ENCODE measurements at regions of chr13 and their contacts with region 1.

Region 1: DNA sequence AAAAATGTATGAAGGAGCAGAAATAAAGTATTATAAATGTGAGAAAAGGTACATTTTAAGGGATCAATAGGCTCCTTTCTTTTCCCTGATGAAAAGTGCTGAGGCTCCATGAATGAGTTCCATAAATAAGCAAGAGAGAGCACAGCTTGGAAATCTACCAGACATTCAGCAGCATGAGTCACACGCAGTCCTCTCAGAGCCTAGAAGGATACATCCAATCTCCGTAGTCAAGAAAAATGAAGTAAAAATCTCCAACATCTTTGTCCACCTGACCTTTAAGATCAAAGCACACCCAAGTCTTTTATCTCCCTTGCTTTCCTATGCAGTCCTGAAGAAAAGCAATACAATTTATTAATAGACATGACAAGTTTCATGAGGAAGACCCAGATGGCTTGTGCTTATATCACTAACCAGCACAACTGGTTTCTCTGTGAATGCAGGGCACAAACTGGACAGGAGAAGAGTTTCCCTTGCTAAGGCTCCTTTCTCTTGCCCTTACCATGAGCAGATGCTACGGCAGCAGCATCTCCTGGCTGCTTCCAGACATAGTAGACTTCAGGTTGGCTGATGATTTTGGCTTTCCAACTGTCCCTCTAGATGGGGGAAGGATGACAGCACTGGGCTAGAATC is 730.8 kb downstream of the EFNB2 start:
- DNase-seq: peak in 1 of 2 donors; percentile 7
- ATAC-seq: no peak
- H3K4me3 ChIP-seq: no peak overlapping the region
- H3K27ac ChIP-seq: no peak overlapping the region
- H3K4me1 ChIP-seq: no peaks in the 10 kb centered on the region
- H3K27me3 ChIP-seq: no peaks in the 10 kb centered on the region
- CTCF ChIP-seq: no peak

Region 2: GRCh38 chr13:106291006-106291405 is 486.3 kb after region 1 on chr13:
- intact Hi-C with region 1: no loop called
- DNase-seq: no peak
- ATAC-seq: no peak
- H3K4me3 ChIP-seq: no peak overlapping the region
- H3K27ac ChIP-seq: no peak overlapping the region
- H3K4me1 ChIP-seq: no peaks in the 10 kb centered on the region
- H3K27me3 ChIP-seq: peaks cover 0 to 4% (median 0%) of the 10 kb centered on the region in 7 donors
- CTCF ChIP-seq: no peak

Region 3: DNA sequence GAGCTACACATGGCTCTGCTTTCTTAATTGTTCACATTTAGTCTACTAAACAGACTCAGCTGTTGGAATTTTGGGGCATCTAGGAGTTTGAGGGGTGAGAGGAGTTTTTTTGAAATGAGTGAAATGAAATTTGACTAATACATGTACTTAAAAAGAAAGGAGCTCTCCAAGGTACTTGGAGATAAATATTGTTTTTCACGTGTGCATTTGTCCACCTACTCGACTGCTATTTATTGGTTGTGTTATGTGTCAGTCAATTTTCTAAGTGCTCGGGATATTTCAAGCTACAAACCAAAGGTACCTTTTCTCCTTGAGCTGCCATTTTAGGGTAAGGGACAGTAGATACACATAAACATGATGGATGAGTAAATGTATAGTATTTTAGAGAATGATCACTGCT is 1713.6 kb after region 1 on chr13:
- intact Hi-C with region 1: loop called in 1 of 10 experiments (anchors 5 kb)
- DNase-seq: no peak
- ATAC-seq: no peak
- H3K4me3 ChIP-seq: no peak overlapping the region
- H3K27ac ChIP-seq: no peak overlapping the region
- H3K4me1 ChIP-seq: no peaks in the 10 kb centered on the region
- H3K27me3 ChIP-seq: peaks cover 0 to 4% (median 0%) of the 10 kb centered on the region in 7 donors
- CTCF ChIP-seq: no peak